Activated CD4-positive, alpha-beta memory T cell treated with anti-CD3 and anti-CD28 coated beads for 36 hours (primary cell): ENCODE measurements at regions of chr20 and their contacts with region 1.

Region 1: GRCh38 chr20:5714261-5715041 is 35.8 kb upstream of the SHLD1 start:
- DNase-seq: peak; percentile 70
- H3K4me3 Mint-ChIP-seq: peak overlapping the region; percentile 21
- H3K27ac Mint-ChIP-seq: peak overlapping the region; percentile 84
- H3K4me1 Mint-ChIP-seq: peaks cover 40% of the 10 kb centered on the region
- H3K27me3 Mint-ChIP-seq: no peaks in the 10 kb centered on the region

Region 2: GRCh38 chr20:5642155-5642981 is 72.1 kb before region 1 on chr20:
- CTCF ChIA-PET with region 1: interaction called, 4 read pairs
- POLR2A ChIA-PET with region 1: no interaction called
- intact Hi-C with region 1: loop called (anchors 1 kb)
- DNase-seq: no peak
- H3K4me3 Mint-ChIP-seq: no peak overlapping the region
- H3K27ac Mint-ChIP-seq: peak overlapping the region; percentile 1
- H3K4me1 Mint-ChIP-seq: peaks cover 34% of the 10 kb centered on the region
- H3K27me3 Mint-ChIP-seq: no peaks in the 10 kb centered on the region

Region 3: GRCh38 chr20:5735845-5736525 is 21.5 kb after region 1 on chr20:
- CTCF ChIA-PET with region 1: no interaction called
- POLR2A ChIA-PET with region 1: no interaction called
- intact Hi-C with region 1: loop called (anchors 1 kb)
- DNase-seq: no peak
- H3K4me3 Mint-ChIP-seq: no peak overlapping the region
- H3K27ac Mint-ChIP-seq: peak overlapping the region; percentile 43
- H3K4me1 Mint-ChIP-seq: peaks cover 29% of the 10 kb centered on the region
- H3K27me3 Mint-ChIP-seq: no peaks in the 10 kb centered on the region

Region 4: GRCh38 chr20:5766085-5766764 is 51.8 kb after region 1 on chr20:
- CTCF ChIA-PET with region 1: no interaction called
- POLR2A ChIA-PET with region 1: no interaction called
- intact Hi-C with region 1: loop called (anchors 2 kb)
- DNase-seq: no peak
- H3K4me3 Mint-ChIP-seq: no peak overlapping the region
- H3K27ac Mint-ChIP-seq: no peak overlapping the region
- H3K4me1 Mint-ChIP-seq: peaks cover 23% of the 10 kb centered on the region
- H3K27me3 Mint-ChIP-seq: no peaks in the 10 kb centered on the region

Region 5: DNA sequence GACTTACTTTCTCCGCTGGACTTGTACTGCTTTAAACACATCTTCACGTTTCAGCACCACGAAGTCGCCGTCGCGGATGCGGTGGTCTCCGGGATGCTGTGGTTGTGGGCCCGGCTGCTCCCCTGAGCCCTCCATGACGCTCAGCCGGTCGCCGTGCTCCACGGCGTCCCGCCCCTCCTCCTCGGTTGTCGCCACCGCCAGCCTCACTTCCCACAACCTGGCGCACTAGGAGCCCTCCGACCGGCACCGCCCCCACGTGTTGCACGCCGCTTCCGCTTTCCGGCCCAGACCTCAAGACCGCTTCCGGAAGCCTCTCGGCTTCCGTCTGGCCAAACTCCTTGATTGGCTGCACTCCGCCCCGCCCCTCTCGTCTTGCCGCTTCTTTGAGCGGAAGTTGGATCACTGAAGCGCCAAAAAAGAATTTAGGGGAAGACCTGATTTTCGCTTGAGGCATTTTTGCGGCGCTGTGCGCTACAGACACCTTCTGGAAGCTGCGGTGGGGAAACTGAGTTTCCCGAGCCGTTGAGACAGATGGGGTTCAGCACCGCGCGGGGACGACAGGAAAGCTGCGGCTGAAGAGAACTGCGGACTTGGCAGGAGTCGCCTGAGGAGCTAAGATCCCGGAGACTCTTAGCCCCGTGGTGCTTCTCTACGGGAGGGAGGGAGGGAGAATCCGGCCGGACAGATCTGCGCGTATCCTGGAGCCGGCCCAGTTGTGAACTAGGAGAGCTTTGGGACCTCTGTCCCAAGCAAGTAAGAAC is 236.0 kb after region 1 on chr20 and contains the starts of genes MCM8 and TRMT6:
- CTCF ChIA-PET with region 1: no interaction called
- POLR2A ChIA-PET with region 1: interaction called, 3 read pairs
- intact Hi-C with region 1: loop called (anchors 1 kb)
- DNase-seq: peak; percentile 98
- H3K4me3 Mint-ChIP-seq: peak within 1 kb of the TSS; percentile 88
- H3K27ac Mint-ChIP-seq: peak within 1 kb of the TSS; percentile 95
- H3K4me1 Mint-ChIP-seq: peaks cover 58% of the 10 kb centered on the region
- H3K27me3 Mint-ChIP-seq: peaks cover 1% of the 10 kb centered on the region
- total RNA-seq, gene MCM8: 46.8 to 50.7 TPM
- total RNA-seq, gene TRMT6: 24.9 to 27.1 TPM